Activated B cell treated with CpG ODN at 0.5 μM for 24 hours (primary cell): ENCODE measurements at regions of chr14 and their contacts with region 1.

Region 1: GRCh38 chr14:24215495-24216344 is at the start of gene MDP1:
- DNase-seq: peak; percentile 71
- ATAC-seq: peak; percentile 75
- H3K4me3 Mint-ChIP-seq: peak within 1 kb of the TSS; percentile 93
- H3K27ac Mint-ChIP-seq: peak within 1 kb of the TSS; percentile 95
- H3K4me1 Mint-ChIP-seq: peaks cover 50% of the 10 kb centered on the region
- H3K27me3 Mint-ChIP-seq: no peaks in the 10 kb centered on the region
- CTCF ChIP-seq: no peak
- total RNA-seq, gene MDP1: 12.7 and 16.3 TPM in 2 replicates

Region 2: GRCh38 chr14:24135834-24136542 is 79.7 kb before region 1 on chr14 and contains the start of gene PSME1:
- CTCF ChIA-PET with region 1: no interaction called
- POLR2A ChIA-PET with region 1: interaction called, 13 read pairs
- intact Hi-C with region 1: loop called (anchors 1 kb)
- DNase-seq: peak; percentile 94
- ATAC-seq: peak; percentile 97
- H3K4me3 Mint-ChIP-seq: peak within 1 kb of the TSS; percentile 91
- H3K27ac Mint-ChIP-seq: peak within 1 kb of the TSS; percentile 90
- H3K4me1 Mint-ChIP-seq: peaks cover 57% of the 10 kb centered on the region
- H3K27me3 Mint-ChIP-seq: no peaks in the 10 kb centered on the region
- CTCF ChIP-seq: no peak
- total RNA-seq, gene PSME1: 406 and 449 TPM in 2 replicates

Region 3: DNA sequence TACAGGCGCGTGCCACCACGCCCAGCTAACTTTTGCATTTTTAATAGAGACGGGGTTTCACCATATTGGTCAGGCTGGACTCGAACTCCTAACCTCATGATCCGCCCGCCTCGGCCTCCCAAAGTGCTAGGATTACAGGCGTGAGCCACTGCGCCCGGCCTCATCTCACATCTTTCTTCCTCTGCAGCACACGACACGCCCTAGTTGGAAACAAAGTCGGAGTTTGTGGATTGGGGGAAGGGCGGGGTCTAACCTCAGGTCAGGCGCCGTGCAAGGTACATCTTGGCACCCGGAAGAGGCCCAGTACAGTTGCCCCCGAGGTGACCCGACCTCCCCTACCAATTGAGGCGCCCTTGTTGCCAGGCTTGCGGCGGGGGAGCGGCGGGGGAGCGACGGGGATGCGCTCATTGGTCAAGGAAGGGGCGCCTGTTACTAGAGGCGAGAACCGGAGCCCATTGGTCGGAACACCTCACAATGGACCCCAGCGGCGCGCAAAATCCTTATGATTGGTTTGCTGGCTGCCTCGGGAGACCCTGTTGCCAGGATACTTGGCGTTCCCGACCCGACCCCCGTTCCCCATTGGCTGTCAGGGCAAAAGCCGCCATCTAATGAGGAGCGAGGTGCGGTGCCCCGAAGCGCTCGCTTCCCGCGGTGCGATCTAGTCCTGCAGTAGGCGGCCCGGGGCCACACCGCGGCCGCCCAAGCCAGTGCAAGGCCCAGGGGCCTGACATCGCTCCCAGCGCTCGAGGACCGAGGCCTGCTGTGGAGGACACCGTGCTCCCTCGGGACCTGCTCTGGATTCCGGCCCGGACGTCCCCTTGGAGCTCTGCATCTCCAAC is 44.1 kb before region 1 on chr14 and contains the start of gene REC8:
- CTCF ChIA-PET with region 1: no interaction called
- POLR2A ChIA-PET with region 1: interaction called, 18 read pairs
- intact Hi-C with region 1: no loop called
- DNase-seq: peak; percentile 68
- ATAC-seq: peak; percentile 91
- H3K4me3 Mint-ChIP-seq: peak within 1 kb of the TSS; percentile 90
- H3K27ac Mint-ChIP-seq: peak within 1 kb of the TSS; percentile 84
- H3K4me1 Mint-ChIP-seq: peaks cover 25% of the 10 kb centered on the region
- H3K27me3 Mint-ChIP-seq: no peaks in the 10 kb centered on the region
- CTCF ChIP-seq: no peak
- total RNA-seq, gene REC8: 27.0 and 35.3 TPM in 2 replicates

Region 4: DNA sequence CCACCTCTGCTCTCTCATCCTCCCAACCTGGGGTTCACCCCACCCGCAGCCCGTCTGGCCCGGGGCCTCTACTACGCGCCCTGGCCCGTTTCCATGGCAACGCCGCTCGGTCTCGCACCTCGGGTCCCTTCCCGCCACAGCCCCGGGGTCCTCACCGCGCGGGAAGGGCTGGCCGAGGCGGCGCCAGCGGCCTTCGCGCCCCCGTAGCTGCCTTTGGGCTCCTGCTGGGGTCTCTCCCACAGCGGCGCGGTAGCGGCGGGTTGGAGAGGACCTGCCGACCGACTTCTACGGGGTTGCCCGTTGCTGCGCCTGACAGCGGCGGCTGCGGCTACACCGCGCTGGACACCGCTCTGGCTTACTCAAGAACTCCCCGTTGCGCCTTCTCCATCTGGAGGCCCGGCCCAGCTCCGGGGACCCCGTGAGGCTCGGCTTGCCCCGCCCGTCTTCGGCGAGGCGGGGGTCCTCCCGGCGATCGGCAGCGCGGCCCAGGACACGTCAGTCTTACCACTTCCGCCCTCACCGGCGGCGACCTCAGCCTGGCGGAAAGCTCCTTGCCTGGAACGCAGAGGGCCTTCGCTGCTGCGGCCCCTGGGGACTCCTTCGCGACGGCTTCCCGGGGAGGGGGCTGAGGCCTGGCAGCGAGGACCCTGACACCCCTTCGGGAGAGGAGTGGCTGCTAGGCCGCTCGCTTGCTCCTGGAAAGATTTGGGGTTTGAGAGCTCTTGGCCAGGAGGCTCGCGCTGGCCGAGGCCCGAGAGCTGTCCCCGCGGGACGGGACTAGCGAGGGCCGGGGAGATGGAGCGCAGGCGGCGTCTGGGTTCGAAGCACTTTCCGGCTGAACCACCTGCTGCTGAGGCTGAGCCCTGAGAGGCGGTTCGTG is 20.3 kb before region 1 on chr14 and contains the start of gene TM9SF1:
- CTCF ChIA-PET with region 1: interaction called, 6 read pairs
- POLR2A ChIA-PET with region 1: interaction called, 143 read pairs
- intact Hi-C with region 1: loop called (anchors 1 kb)
- DNase-seq: peak; percentile 91
- ATAC-seq: peak; percentile 83
- H3K4me3 Mint-ChIP-seq: peak within 1 kb of the TSS; percentile 96
- H3K27ac Mint-ChIP-seq: peak within 1 kb of the TSS; percentile 97
- H3K4me1 Mint-ChIP-seq: peaks cover 48% of the 10 kb centered on the region
- H3K27me3 Mint-ChIP-seq: no peaks in the 10 kb centered on the region
- CTCF ChIP-seq: no peak
- total RNA-seq, gene TM9SF1: 24.5 and 26.3 TPM in 2 replicates

Region 5: DNA sequence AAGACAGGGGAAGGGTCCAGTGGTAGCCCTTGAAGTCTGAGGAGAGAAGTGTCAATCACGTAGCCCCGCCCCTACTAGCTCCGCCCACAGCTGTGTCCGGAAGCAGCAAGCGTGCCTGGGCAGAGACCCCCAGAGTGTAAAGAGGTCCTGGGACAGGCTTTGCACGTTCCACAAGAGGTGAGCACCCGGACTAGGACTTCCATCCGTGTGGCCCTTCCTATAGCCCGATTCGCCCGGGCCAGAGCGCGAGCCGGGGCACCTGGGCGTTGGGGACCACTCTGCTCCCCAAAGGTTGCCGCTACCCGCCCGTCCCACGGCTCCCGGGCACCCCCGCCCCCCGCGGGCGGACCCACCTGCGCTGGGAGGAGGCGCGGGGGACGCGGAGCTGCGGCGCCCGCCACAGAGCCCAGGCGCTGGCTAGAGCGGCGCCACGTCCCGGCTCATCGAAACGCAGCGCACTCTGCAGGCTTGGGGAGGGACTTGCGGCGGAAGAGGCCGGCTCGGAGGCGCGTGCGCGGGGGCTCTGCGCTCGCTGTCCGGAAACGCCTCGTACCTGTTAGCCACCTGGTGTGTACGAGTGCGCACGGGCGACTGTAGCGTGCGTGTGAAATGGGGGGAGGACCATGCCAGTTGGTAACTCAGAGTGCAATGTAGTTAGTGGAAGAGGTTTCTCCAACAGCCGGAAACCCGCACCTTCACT is 55.6 kb after region 1 on chr14 and contains the start of gene RABGGTA:
- CTCF ChIA-PET with region 1: interaction called, 3 read pairs
- POLR2A ChIA-PET with region 1: interaction called, 18 read pairs
- intact Hi-C with region 1: loop called (anchors 1 kb)
- DNase-seq: peak; percentile 88
- ATAC-seq: peak; percentile 83
- H3K4me3 Mint-ChIP-seq: peak within 1 kb of the TSS; percentile 90
- H3K27ac Mint-ChIP-seq: peak within 1 kb of the TSS; percentile 96
- H3K4me1 Mint-ChIP-seq: peaks cover 57% of the 10 kb centered on the region
- H3K27me3 Mint-ChIP-seq: no peaks in the 10 kb centered on the region
- CTCF ChIP-seq: no peak
- total RNA-seq, gene RABGGTA: 53.6 and 70.5 TPM in 2 replicates

Region 6: GRCh38 chr14:24310646-24311604 is 95.2 kb after region 1 on chr14 and contains the start of gene LTB4R:
- CTCF ChIA-PET with region 1: interaction called, 15 read pairs
- POLR2A ChIA-PET with region 1: interaction called, 14 read pairs
- intact Hi-C with region 1: loop called (anchors 1 kb)
- DNase-seq: peak; percentile 73
- ATAC-seq: peak; percentile 78
- H3K4me3 Mint-ChIP-seq: peak within 1 kb of the TSS; percentile 75
- H3K27ac Mint-ChIP-seq: peak within 1 kb of the TSS; percentile 80
- H3K4me1 Mint-ChIP-seq: peaks cover 59% of the 10 kb centered on the region
- H3K27me3 Mint-ChIP-seq: no peaks in the 10 kb centered on the region
- CTCF ChIP-seq: no peak
- total RNA-seq, gene LTB4R: 8.2 and 8.6 TPM in 2 replicates